ENCODE measurements at regions of chr18 and their contacts with region 1.

Region 1: GRCh38 chr18:42028247-42028832 is 73.3 kb downstream of the PIK3C3 start:
- DNase-seq: peak; percentile 28 to 67 (median 64)
- H3K4me3 ChIP-seq: no peak overlapping the region
- H3K27ac ChIP-seq: no peak overlapping the region
- H3K4me1 ChIP-seq: no peaks in the 10 kb centered on the region
- H3K27me3 ChIP-seq: no peaks in the 10 kb centered on the region

Region 2: DNA sequence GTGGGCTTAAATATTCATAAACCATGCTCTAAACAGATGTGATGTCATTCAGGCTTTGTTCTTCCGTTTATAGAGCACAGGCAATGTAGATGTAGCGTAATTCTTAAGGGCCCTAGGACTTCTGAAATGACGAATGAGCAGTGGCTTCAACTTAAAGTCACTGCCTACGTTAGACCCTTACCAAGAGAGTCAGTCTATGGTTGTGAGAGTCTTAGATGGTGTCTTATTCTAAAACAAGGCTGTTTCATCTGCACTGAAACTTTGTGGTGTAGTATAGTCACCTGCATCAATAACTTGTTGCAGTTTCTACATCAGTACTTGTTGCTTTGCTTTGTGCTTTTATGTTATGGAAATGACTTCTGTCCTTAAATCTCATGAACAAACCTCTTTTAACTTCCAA is 17.3 kb before region 1 on chr18:
- CTCF ChIA-PET with region 1: interaction called, 19 read pairs
- POLR2A ChIA-PET with region 1: no interaction called
- DNase-seq: no peak
- H3K4me3 ChIP-seq: no peak overlapping the region
- H3K27ac ChIP-seq: no peak overlapping the region
- H3K4me1 ChIP-seq: no peaks in the 10 kb centered on the region
- H3K27me3 ChIP-seq: no peaks in the 10 kb centered on the region

Region 3: DNA sequence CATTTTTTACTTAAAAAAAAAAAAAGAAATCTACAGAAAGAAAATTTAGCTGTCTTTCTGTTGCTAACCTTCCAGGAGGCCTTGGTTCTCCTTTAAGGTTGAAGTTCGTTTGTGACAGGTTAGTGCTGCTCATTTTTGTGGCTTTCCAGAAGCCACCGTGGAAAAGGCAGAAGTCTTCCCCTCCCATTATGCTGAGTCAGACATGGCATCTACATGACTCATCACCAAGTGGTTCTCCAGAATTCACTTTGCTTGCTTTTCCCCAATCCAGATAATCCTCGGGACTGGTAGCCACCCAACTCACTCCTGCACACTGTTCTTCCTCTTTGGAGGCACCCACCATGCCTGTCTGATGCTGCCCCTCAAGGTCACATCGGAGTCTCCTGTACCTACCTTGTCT is 155.4 kb after region 1 on chr18:
- CTCF ChIA-PET with region 1: no interaction called
- POLR2A ChIA-PET with region 1: no interaction called
- DNase-seq: no peak
- H3K4me3 ChIP-seq: no peak overlapping the region
- H3K27ac ChIP-seq: no peak overlapping the region
- H3K4me1 ChIP-seq: no peaks in the 10 kb centered on the region
- H3K27me3 ChIP-seq: no peaks in the 10 kb centered on the region